ENCODE measurements at regions of chr22 and their contacts with region 1.

Region 1: DNA sequence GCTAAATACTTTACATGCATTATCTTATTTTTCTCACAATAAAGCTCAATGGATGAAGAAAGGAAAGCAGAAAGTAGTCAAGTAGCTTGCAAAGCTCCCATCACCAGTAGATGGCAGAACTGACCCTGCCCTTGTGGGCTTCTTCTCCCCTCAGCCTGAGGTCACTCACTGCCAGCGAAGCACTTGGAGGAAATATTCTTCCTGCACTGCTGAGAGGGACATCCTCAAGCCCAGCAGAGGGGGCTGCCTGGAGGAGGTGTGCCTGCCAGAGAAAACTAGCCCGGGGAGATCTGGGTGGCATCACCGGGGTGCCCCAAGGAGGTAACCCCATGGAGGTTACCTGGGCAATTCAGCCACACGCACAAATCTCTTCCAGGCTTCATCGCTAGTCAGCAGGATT is 6.6 kb downstream of the APOL4 start:
- DNase-seq: peak; percentile 63
- H3K4me3 Mint-ChIP-seq: no peak overlapping the region
- H3K27ac Mint-ChIP-seq: no peak overlapping the region
- H3K4me1 Mint-ChIP-seq: peaks cover 24% of the 10 kb centered on the region
- H3K27me3 Mint-ChIP-seq: no peaks in the 10 kb centered on the region

Region 2: DNA sequence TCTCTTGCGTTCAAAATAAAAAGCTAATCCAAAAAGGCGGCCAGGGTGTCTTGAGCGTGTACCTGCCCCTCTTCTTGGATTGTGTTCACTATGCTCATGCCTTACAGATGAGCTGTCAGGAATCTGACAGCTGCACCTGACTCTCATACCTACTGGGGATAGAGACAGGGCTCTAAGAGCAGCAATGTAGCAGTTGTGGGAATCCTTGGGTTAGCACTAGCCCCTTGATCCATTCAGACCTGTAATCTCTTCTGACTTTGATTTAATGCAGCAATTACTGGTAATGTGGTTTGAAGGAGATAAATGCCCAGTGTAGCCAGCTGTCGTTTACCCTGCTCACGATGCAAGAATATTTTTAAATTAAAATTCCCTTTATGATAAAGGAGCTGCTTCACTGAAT is 331.5 kb before region 1 on chr22:
- CTCF ChIA-PET with region 1: no interaction called
- POLR2A ChIA-PET with region 1: no interaction called
- intact Hi-C with region 1: no loop called
- DNase-seq: no peak
- H3K4me3 Mint-ChIP-seq: no peak overlapping the region
- H3K27ac Mint-ChIP-seq: no peak overlapping the region
- H3K4me1 Mint-ChIP-seq: no peaks in the 10 kb centered on the region
- H3K27me3 Mint-ChIP-seq: no peaks in the 10 kb centered on the region

Region 3: GRCh38 chr22:36065775-36066559 is 129.0 kb before region 1 on chr22:
- CTCF ChIA-PET with region 1: no interaction called
- POLR2A ChIA-PET with region 1: no interaction called
- intact Hi-C with region 1: no loop called
- DNase-seq: peak; percentile 85
- H3K4me3 Mint-ChIP-seq: peak overlapping the region; percentile 78
- H3K27ac Mint-ChIP-seq: peak overlapping the region; percentile 69
- H3K4me1 Mint-ChIP-seq: peaks cover 4% of the 10 kb centered on the region
- H3K27me3 Mint-ChIP-seq: no peaks in the 10 kb centered on the region

Region 4: GRCh38 chr22:36144886-36145541 is 50.0 kb before region 1 on chr22:
- CTCF ChIA-PET with region 1: no interaction called
- POLR2A ChIA-PET with region 1: no interaction called
- intact Hi-C with region 1: no loop called
- DNase-seq: peak; percentile 55
- H3K4me3 Mint-ChIP-seq: no peak overlapping the region
- H3K27ac Mint-ChIP-seq: peak overlapping the region; percentile 36
- H3K4me1 Mint-ChIP-seq: peaks cover 17% of the 10 kb centered on the region
- H3K27me3 Mint-ChIP-seq: no peaks in the 10 kb centered on the region

Region 5: DNA sequence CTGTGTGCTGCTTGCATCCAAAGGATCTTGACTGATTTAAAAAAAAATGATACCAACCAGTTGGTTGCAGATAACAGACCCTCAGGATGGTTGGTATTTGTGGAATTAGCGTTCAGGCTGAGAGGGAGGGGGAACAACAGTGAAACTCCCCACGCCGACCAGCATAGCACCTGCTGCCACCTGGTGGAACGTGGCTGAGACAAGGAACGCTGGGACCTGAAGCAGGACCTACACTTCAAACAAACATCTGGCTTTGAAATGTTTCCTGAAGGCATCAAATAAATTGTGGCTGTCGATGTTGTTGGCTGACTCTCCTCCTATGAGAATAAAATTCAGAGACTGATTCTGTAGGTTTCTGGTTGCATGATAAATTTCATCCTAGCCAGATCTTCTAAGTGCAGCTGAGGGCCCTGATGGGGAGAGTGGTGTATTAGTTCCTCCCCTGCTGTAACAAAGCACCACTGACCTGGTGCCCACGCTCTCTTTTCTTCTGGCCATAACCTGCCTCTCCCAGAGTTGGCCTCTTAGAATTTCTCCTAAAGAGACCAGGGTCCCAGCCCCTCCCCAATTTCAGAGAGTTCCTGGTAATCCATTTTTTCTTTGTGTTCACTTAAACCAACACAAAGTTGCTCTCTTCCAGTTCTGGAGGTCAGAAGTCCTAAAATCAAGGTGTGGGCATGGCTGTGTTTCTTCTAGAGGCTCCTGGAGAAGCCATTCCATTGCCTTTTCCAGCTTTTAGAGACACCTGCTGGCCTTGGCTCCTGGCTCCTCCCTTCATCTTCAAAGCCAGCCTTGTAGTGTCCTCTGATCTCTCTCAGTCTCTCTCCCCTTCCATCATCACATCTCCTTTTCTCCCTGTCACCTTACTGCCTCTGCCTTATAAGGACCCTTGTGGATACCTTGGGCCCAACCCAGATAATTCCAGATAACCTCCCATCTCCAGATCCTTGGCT is 27.1 kb after region 1 on chr22:
- CTCF ChIA-PET with region 1: interaction called, 23 read pairs
- POLR2A ChIA-PET with region 1: no interaction called
- intact Hi-C with region 1: loop called (anchors 1 kb)
- DNase-seq: peak; percentile 61
- H3K4me3 Mint-ChIP-seq: no peak overlapping the region
- H3K27ac Mint-ChIP-seq: no peak overlapping the region
- H3K4me1 Mint-ChIP-seq: peaks cover 9% of the 10 kb centered on the region
- H3K27me3 Mint-ChIP-seq: peaks cover 8% of the 10 kb centered on the region

Region 6: GRCh38 chr22:36277482-36278291 is 82.7 kb after region 1 on chr22:
- CTCF ChIA-PET with region 1: interaction called, 25 read pairs
- POLR2A ChIA-PET with region 1: no interaction called
- intact Hi-C with region 1: loop called (anchors 1 kb)
- DNase-seq: peak; percentile 86
- H3K4me3 Mint-ChIP-seq: peak overlapping the region; percentile 37
- H3K27ac Mint-ChIP-seq: peak overlapping the region; percentile 75
- H3K4me1 Mint-ChIP-seq: peaks cover 39% of the 10 kb centered on the region
- H3K27me3 Mint-ChIP-seq: no peaks in the 10 kb centered on the region

Region 7: DNA sequence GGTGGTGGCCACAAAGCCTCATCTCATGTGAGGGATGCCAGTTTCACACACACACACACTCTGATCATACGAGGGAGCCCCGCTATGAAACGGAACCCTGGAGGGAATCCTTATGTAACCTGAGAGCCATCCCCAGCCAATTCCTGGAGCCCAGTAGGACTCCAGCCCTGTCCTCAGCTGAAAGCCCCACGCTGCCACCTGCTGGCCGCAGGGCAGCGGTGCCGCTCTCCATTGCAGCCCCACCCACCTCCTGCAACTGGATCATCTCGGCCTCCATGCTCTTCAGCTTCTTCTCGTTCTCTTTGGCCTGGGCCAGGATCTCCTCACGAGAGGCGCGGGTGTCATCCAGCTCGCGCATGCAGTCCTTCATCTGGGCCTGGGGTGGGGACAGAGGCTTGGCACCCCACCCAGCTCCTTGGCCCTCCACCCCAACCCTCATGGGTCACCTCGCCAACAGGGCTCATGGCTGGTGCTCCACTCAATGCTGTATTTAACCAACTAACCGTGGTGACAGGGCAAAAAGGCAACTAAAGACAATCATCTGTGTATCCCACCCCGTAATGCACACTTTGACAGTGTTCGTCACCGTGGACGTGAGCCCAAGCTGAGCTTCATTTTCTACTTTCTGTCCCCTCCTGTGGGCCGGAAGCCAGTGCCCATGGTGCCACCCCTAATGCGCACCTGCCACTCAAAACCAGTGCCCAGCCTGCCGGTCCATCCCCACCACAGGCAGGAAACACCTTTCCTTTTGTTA is 91.7 kb after region 1 on chr22:
- CTCF ChIA-PET with region 1: interaction called, 13 read pairs
- POLR2A ChIA-PET with region 1: no interaction called
- intact Hi-C with region 1: no loop called
- DNase-seq: peak; percentile 77
- H3K4me3 Mint-ChIP-seq: peak overlapping the region; percentile 4
- H3K27ac Mint-ChIP-seq: peak overlapping the region; percentile 60
- H3K4me1 Mint-ChIP-seq: peaks cover 23% of the 10 kb centered on the region
- H3K27me3 Mint-ChIP-seq: no peaks in the 10 kb centered on the region

Region 8: DNA sequence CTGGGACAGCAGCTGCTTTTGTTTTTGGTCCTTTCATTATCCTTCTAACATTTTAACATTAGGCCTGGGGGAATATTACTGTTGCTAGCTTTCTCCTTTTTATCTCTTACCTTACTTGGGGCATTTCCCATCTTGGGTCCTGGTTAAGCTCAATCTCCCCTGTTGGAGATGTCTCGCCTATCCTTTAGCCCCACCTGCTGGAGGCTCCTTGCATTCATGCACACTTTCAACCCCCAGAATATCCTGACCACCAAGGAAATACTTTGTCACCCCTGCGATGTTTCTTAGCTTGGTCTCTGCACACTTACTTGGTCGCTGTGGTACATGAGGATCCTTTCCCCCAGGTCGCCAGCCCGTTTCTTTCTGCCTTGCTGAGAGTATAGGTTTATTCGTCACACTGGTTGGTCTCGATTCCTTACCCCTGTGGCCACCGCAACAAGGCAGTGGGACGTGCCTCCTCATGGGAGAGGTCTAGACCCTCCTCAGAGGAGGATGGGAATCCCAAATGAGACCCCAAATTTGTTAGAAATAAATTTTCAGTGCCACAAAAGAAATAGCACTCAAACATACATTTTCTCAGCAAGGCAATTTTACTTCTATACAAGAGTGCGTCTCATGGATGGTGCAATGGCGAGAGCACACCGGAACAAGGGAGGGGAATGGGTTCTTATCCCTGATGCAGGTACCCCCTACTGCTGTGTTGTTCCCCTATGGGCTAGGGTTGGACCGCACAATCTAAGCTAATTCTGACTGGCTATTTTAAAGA is 291.8 kb after region 1 on chr22:
- CTCF ChIA-PET with region 1: interaction called, 10 read pairs
- POLR2A ChIA-PET with region 1: no interaction called
- intact Hi-C with region 1: no loop called
- DNase-seq: peak; percentile 71
- H3K4me3 Mint-ChIP-seq: no peak overlapping the region
- H3K27ac Mint-ChIP-seq: no peak overlapping the region
- H3K4me1 Mint-ChIP-seq: peaks cover 3% of the 10 kb centered on the region
- H3K27me3 Mint-ChIP-seq: no peaks in the 10 kb centered on the region